ENCODE measurements at regions of chr15 and their contacts with region 1.

Region 1: GRCh38 chr15:70670680-70671079 is 92.7 kb downstream of the UACA start:
- DNase-seq: no peak
- H3K4me3 Mint-ChIP-seq: no peak overlapping the region
- H3K27ac Mint-ChIP-seq: no peak overlapping the region
- H3K4me1 Mint-ChIP-seq: peaks cover 21% of the 10 kb centered on the region
- H3K27me3 Mint-ChIP-seq: peaks cover 10% of the 10 kb centered on the region

Region 2: GRCh38 chr15:70492240-70493177 is 178.2 kb before region 1 on chr15:
- intact Hi-C with region 1: no loop called
- DNase-seq: peak; percentile 85
- H3K4me3 Mint-ChIP-seq: peak overlapping the region; percentile 56
- H3K27ac Mint-ChIP-seq: peak overlapping the region; percentile 94
- H3K4me1 Mint-ChIP-seq: peaks cover 71% of the 10 kb centered on the region
- H3K27me3 Mint-ChIP-seq: peaks cover 40% of the 10 kb centered on the region

Region 3: DNA sequence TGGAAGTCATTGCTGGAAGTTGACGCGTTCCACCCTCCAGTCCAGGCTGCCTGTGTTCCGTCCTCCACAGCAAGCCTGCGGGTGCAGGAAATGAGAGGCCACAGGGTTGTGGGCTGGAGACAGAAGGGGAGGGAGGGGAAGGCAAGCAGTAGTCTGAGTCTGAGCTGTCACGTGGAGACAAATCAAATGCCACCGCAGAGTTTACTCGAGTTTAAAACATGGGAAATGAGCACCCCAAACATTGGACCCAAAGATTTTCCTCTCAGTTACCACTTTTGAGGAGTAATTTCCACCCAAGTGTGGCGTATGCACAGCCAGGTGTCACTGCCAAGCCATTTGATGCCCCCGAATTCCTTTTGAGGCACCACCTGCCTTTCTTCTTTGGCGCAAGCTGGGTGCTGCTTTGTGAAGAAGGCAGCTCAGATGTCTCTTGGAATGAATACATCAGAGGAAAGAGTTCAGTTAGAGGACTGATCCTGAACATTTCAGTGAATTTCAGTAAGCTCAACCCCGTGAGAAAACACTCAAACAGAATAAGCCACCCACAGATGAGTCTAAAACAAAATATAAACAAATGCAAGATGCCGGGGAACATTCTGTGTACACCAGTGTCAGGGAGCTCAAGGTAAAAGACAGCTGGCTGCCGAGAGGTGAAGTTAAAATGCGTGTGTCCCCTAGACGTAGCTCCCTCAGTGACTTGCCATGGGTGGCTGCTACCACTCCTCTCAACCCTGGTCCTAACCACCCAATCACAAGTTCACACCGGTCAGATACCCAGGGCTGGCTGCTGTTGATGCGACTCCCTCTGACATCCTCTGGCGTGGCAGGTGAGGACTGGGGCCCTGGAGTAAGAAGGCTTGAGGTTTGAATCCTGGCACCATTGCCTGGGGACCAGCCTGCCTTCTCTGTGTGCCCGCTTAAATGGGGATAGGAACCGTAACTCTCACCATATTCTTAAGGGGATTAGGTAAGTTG is 111.1 kb before region 1 on chr15:
- intact Hi-C with region 1: loop called (anchors 1 kb)
- DNase-seq: peak; percentile 65
- H3K4me3 Mint-ChIP-seq: no peak overlapping the region
- H3K27ac Mint-ChIP-seq: no peak overlapping the region
- H3K4me1 Mint-ChIP-seq: peaks cover 9% of the 10 kb centered on the region
- H3K27me3 Mint-ChIP-seq: peaks cover 22% of the 10 kb centered on the region

Region 4: GRCh38 chr15:70636540-70637165 is 34.0 kb before region 1 on chr15:
- intact Hi-C with region 1: no loop called
- DNase-seq: no peak
- H3K4me3 Mint-ChIP-seq: no peak overlapping the region
- H3K27ac Mint-ChIP-seq: no peak overlapping the region
- H3K4me1 Mint-ChIP-seq: peaks cover 6% of the 10 kb centered on the region
- H3K27me3 Mint-ChIP-seq: peaks cover 40% of the 10 kb centered on the region

Region 5: DNA sequence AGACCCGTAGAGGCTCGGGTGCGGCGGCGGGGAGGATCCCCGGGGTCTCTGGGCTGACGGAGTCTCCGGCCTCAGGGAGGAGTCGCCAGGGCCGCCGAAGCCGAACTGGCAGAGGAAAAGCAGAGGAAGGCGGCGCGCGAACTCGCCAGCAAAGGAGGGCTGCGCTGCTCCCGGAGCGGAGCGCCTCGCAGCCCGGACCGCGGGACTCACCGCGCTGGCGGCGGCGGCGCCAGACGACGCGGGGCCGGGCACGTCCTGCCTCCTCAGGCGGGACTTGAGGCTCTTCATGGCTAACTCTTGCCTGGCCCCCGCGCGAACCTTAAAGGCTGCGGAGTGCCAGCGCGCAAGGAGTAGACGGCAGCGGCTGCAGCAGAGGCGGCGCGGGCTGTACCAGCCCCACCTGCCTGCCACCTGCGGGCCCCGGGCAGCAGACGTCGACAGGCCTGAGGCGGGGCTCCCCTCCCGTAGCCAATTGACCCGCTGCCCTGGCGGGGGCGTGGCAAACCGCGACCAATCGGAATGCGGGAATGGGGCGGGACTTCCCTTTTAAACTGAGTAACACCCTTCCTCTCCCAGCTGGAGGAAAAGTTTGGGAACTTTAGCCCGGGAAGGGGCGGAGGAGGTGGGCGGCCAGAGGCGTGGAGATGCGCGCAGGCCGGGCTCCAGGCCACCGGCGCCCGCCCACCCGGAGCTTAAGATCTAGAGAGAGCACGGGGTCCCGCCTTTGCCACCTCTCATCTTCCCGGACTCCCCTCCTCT is 92.6 kb after region 1 on chr15 and contains the start of gene UACA:
- intact Hi-C with region 1: loop called (anchors 5 kb)
- DNase-seq: peak; percentile 67
- H3K4me3 Mint-ChIP-seq: peak within 1 kb of the TSS; percentile 82
- H3K27ac Mint-ChIP-seq: no peak within 1 kb of the TSS
- H3K4me1 Mint-ChIP-seq: peaks cover 17% of the 10 kb centered on the region
- H3K27me3 Mint-ChIP-seq: peaks cover 58% of the 10 kb centered on the region
- total RNA-seq, gene UACA: 1.1 and 1.3 TPM in 2 replicates

Region 6: DNA sequence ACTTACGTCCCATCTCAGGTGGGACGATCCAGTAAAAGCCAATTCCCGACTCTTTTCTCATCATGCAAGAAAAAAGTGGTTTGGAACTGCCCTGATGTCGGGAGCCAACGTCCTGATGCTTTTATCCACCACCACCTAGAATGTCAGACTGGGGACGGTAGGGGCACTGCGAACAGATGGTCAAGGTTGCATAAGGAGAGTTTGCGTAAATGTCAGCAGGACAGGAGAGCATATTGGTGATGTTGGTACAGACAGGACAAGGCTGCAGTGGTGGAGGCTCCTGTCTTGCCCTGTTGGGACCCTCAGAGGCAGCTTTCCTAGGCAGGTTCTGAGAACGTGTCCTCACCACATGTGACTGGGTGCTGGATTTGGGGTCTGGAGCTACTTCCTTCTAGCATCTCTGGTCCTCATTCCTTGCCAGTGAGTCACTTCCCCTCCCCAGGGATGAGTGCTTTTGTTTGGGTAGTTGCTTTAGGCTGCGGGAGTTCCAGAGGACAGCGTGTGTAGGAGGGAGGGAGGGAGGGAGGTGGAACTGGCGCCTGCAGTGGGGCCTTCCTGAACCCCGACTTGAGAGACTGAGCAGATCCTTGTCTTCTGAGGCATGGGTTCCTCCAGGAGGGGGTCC is 465.6 kb after region 1 on chr15:
- intact Hi-C with region 1: no loop called
- DNase-seq: no peak
- H3K4me3 Mint-ChIP-seq: no peak overlapping the region
- H3K27ac Mint-ChIP-seq: no peak overlapping the region
- H3K4me1 Mint-ChIP-seq: no peaks in the 10 kb centered on the region
- H3K27me3 Mint-ChIP-seq: peaks cover 2% of the 10 kb centered on the region